Tibial artery (tissue), 4 donors: ENCODE measurements at regions of chr14 and their contacts with region 1.

Region 1: GRCh38 chr14:35385042-35385839 is 19.3 kb downstream of the NFKBIA start:
- DNase-seq: peak; percentile 86 to 97
- H3K4me3 ChIP-seq: no peak overlapping the region
- H3K27ac ChIP-seq: peak overlapping the region; percentile 82 to 83
- H3K4me1 ChIP-seq: peaks cover 0 to 40% (median 27%) of the 10 kb centered on the region in 4 donors
- H3K27me3 ChIP-seq: no peaks in the 10 kb centered on the region
- CTCF ChIP-seq: no peak

Region 2: GRCh38 chr14:35341446-35342159 is 43.6 kb before region 1 on chr14:
- intact Hi-C with region 1: loop called (anchors 2 kb)
- DNase-seq: peak; percentile 99 to 100
- H3K4me3 ChIP-seq: peak overlapping the region; percentile 48 to 51
- H3K27ac ChIP-seq: peak overlapping the region; percentile 92 to 98
- H3K4me1 ChIP-seq: peaks cover 15 to 65% (median 47%) of the 10 kb centered on the region in 4 donors
- H3K27me3 ChIP-seq: no peaks in the 10 kb centered on the region
- CTCF ChIP-seq: no peak

Region 3: DNA sequence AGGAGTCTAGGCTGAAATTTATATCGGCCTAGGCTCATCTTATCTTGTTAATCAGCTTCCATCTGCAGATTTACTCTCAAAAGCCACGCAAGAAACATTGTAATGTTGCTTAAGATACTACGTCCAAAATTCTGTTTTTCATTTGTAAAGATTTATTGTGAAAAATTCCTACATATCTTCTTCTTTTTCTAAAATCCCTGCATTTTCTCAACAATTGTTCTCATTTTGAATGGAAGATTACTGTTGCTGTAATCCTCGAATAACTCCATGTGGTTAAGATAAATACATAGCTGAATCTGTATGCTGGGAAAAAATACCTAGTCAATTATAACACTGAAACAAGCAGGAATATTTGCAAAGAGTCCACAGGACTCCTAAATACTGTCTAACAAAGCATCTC is 164.3 kb after region 1 on chr14:
- intact Hi-C with region 1: no loop called
- DNase-seq: no peak
- H3K4me3 ChIP-seq: no peak overlapping the region
- H3K27ac ChIP-seq: no peak overlapping the region
- H3K4me1 ChIP-seq: peaks cover 0 to 4% (median 0%) of the 10 kb centered on the region in 4 donors
- H3K27me3 ChIP-seq: no peaks in the 10 kb centered on the region
- CTCF ChIP-seq: no peak

Region 4: GRCh38 chr14:35944847-35945246 is 559.6 kb after region 1 on chr14:
- intact Hi-C with region 1: no loop called
- DNase-seq: no peak
- H3K4me3 ChIP-seq: no peak overlapping the region
- H3K27ac ChIP-seq: no peak overlapping the region
- H3K4me1 ChIP-seq: peaks cover 0 to 2% (median 0%) of the 10 kb centered on the region in 4 donors
- H3K27me3 ChIP-seq: peaks cover 0 to 3% of the 10 kb centered on the region in 2 donors
- CTCF ChIP-seq: no peak